Activated naive CD4-positive, alpha-beta T cell treated with anti-CD3 and anti-CD28 coated beads for 36 hours (primary cell): ENCODE measurements at regions of chr3 and their contacts with region 1.

Region 1: DNA sequence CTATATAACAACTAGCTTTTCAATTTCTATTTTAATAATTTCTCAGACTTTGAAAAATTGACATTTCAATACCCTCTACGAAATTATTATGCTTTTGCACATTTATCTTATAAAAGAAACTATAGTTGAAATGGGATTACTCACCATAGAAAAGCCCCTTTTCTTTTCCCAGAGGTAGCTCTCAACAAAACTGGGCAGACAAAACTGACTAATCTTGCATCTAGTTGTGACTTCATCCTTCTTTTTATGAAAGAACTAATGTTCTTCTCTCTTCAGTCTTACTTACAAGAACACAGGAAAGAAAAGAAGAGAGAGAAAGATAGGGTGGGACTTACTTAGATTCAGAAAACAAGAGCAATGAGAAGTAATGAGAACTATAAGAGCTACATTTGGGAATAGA is 61.0 kb downstream of the GPR160 start:
- DNase-seq: no peak
- H3K4me3 Mint-ChIP-seq: peak overlapping the region; percentile 2
- H3K27ac Mint-ChIP-seq: peak overlapping the region; percentile 95
- H3K4me1 Mint-ChIP-seq: peaks cover 59% of the 10 kb centered on the region
- H3K27me3 Mint-ChIP-seq: no peaks in the 10 kb centered on the region

Region 2: GRCh38 chr3:170078620-170079281 is 20.0 kb before region 1 on chr3:
- CTCF ChIA-PET with region 1: interaction called, 4 read pairs
- intact Hi-C with region 1: loop called (anchors 2 kb)
- DNase-seq: no peak
- H3K4me3 Mint-ChIP-seq: no peak overlapping the region
- H3K27ac Mint-ChIP-seq: no peak overlapping the region
- H3K4me1 Mint-ChIP-seq: peaks cover 8% of the 10 kb centered on the region
- H3K27me3 Mint-ChIP-seq: no peaks in the 10 kb centered on the region

Region 3: DNA sequence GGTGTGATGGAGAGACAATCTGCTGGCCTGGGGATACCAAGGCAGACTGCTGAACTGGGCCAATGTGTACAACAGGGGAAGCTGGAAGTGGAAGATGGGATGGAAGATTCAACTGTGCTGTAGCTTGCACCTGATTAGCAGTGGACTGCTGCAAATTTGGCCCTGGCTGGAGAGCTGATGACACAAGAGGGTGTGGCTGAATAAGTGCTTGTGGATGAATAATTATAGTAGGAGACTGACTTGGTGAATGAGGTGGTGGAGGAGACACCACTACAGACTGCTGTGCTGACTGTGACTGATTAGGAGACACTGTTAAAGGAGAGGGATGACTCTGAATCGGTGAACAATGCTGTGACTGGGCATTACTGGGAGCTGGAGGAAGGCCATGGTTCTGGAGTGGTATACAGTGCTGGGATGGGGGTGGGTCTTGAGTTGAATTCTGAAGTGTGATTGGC is 30.3 kb after region 1 on chr3:
- CTCF ChIA-PET with region 1: interaction called, 4 read pairs
- intact Hi-C with region 1: loop called (anchors 2 kb)
- DNase-seq: peak; percentile 48
- H3K4me3 Mint-ChIP-seq: peak overlapping the region; percentile 20
- H3K27ac Mint-ChIP-seq: peak overlapping the region; percentile 76
- H3K4me1 Mint-ChIP-seq: peaks cover 40% of the 10 kb centered on the region
- H3K27me3 Mint-ChIP-seq: no peaks in the 10 kb centered on the region

Region 4: DNA sequence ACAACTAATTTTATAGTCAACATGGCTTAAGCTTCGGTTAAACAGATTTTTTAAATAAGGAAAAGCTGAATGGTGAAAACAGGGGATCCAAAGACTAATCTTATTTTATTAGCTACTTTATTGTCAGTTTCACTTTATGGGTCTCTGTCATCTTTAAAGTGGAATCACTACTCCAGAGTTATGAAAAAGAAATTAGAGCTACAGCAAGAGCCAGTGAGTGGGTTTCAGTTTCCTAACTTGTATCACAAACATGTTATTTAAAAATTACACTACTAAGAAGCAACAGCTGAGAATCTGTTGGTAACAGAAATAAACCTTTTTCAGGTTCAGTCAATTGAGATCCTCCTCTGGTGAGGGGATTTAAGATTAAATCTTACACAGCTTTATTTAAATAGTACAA is 72.8 kb after region 1 on chr3:
- CTCF ChIA-PET with region 1: interaction called, 5 read pairs
- intact Hi-C with region 1: loop called (anchors 2 kb)
- DNase-seq: no peak
- H3K4me3 Mint-ChIP-seq: peak overlapping the region; percentile 21
- H3K27ac Mint-ChIP-seq: peak overlapping the region; percentile 46
- H3K4me1 Mint-ChIP-seq: peaks cover 63% of the 10 kb centered on the region
- H3K27me3 Mint-ChIP-seq: no peaks in the 10 kb centered on the region

Region 5: DNA sequence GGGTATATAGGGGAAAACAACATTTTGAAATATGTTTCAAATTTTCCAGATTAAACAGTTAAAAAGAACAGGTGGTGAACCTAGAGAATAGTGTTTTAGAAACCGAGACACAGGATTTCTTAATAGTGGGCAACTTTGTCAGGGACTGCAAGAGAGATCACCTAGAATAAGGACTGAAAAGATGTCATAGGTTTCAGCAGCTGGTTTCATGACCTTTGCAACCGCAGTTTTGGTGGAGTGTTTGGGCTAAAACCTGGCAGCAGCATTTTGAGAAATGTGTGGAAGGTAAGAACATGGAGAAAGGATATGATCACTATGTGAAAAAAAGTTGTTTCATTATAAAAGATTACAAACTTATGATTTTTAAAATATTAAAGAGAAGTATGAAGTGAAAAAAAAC is 158.4 kb after region 1 on chr3:
- CTCF ChIA-PET with region 1: no interaction called
- intact Hi-C with region 1: loop called (anchors 5 kb)
- DNase-seq: peak; percentile 58
- H3K4me3 Mint-ChIP-seq: no peak overlapping the region
- H3K27ac Mint-ChIP-seq: no peak overlapping the region
- H3K4me1 Mint-ChIP-seq: peaks cover 41% of the 10 kb centered on the region
- H3K27me3 Mint-ChIP-seq: no peaks in the 10 kb centered on the region